Right ventricle myocardium inferior (tissue), 1 donor: ENCODE measurements at regions of chr3 and their contacts with region 1.

Region 1: DNA sequence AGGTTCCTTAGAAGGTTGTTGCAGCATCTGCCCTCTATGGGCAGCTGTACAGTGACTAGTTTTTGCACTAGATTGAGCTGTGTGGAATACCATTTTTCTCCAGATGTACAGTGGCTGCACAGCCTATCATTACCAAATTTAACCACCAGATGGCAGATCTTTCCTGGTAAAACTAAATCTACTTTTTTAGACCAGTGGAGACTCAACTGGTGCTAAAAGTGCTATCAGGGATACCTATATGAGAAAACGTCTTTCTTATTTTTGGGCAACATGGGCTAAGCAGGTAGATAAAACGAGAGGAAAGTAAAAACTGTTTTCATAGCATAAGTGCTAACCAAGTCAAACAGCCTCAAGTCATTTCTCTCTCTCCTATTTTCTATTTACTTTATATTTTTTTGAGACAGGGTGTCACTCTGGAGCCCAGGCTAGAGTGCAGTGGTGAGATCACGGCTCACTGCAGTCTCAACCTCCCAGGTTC is 21.2 kb downstream of the IGSF10 start:
- DNase-seq: no peak
- ATAC-seq: peak; percentile 76

Region 2: GRCh38 chr3:151483961-151484520 is 44.4 kb after region 1 on chr3:
- intact Hi-C with region 1: no loop called
- DNase-seq: no peak
- ATAC-seq: no peak

Region 3: GRCh38 chr3:151553888-151554287 is 114.2 kb after region 1 on chr3:
- intact Hi-C with region 1: loop called (anchors 10 kb)
- DNase-seq: peak; percentile 57
- ATAC-seq: peak; percentile 45

Region 4: DNA sequence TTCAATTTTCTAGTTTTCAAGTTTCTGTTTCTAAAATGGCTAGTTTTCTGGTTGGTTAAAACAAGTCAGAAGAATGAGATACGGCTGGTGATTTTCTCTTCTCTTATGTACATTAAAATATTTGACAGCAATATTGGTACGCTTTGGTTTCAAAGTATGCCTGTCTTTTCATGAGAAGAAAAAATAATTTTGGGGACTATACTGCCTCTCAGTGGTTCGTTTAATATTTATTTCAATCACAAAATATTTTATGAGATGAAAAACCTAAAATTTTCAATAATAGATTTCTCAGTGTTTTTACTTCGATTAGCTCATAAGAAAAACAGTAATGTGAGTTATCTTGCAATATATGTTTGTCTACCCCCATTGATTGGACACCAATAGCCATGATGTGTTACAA is 221.2 kb after region 1 on chr3:
- intact Hi-C with region 1: loop called (anchors 10 kb)
- DNase-seq: no peak
- ATAC-seq: no peak

Region 5: DNA sequence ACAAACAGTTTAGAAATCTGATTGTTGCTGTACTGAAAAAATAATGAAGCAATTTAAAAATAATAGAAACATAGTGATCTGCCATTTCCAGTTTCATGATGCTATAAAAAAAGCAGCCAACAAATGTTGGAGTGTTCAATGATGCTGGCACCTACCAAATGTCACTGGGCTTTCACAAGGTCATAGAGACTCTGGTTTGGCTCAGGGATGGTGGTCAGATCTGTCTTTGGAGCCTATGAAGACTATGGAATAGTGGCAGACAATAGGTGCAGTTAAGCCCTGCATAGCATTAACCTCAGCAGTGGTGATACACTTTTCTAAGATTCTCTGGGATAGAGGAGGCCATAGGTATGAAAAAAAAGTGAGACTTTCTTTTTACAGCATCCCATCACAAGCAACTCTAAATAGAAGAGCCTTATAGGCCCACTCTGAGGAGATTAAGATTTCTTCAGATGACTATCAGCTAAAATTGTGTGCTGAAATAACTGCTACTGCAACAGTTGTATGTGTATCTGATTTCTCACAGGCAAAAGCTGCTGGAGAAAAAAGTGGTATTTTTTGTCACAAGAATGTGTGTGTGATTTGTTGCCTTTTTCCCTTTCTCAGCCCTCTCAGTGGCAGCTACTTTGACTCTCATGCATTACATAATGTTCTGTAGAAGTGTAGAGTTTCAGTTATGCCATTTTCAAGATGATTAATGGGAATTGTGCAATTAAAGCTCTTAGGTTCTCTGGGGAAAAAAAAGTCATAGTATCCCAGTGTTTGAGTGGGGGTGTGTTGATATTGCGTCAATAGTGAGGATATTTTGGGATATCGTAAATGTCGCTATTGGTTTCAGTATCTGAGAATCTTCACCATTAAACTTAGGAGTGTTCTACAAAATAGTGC is 966.5 kb after region 1 on chr3:
- intact Hi-C with region 1: no loop called
- DNase-seq: no peak
- ATAC-seq: peak; percentile 75